Lower leg skin (tissue), 4 donors: ENCODE measurements at regions of chr1 and their contacts with region 1.

Region 1: GRCh38 chr1:44594871-44595746 is 79.2 kb downstream of the TMEM53 start:
- DNase-seq: peak; percentile 36 to 93
- H3K4me3 ChIP-seq: no peak overlapping the region
- CTCF ChIP-seq: peak in 1 of 3 donors; percentile 83
- POLR2A ChIP-seq: no peak

Region 2: DNA sequence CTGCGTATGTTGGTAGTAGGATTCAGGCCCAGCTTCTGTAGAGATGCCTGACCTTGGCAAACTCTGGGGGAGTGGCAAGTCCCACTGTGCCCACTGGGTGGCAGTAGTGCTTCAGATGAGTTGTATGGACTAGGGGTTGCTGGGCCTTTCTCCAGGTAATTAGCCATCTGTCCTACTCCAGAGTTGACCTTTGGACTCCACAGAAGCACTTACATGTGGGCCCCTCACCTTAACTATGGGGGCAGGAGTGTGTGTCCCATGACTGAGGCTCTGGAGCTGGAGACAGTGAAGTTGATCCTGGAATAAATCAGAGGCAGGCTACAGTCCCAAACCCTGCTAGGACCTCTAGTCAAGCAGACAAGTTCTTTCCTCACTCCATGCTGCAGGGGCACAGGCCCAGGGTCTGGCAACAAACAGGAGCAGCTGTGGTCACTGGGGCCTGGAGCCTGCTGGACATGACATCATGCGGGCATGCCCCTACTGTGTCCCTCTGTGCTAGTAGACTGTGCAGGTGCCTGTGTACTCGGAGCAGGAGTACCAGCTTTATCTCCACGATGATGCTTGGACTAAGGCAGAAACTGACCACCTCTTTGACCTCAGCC is 377.2 kb before region 1 on chr1:
- intact Hi-C with region 1: loop called (anchors 5 kb)
- DNase-seq: peak; percentile 77 to 94
- H3K4me3 ChIP-seq: no peak overlapping the region
- CTCF ChIP-seq: peak in 1 of 3 donors; percentile 62
- POLR2A ChIP-seq: no peak

Region 3: GRCh38 chr1:44377925-44378784 is 217.0 kb before region 1 on chr1:
- intact Hi-C with region 1: loop called (anchors 10 kb)
- DNase-seq: peak in 1 of 2 donors; percentile 79
- H3K4me3 ChIP-seq: no peak overlapping the region
- CTCF ChIP-seq: no peak
- POLR2A ChIP-seq: no peak